PC-3 (cell line): ENCODE measurements at regions of chr1 and their contacts with region 1.

Region 1: DNA sequence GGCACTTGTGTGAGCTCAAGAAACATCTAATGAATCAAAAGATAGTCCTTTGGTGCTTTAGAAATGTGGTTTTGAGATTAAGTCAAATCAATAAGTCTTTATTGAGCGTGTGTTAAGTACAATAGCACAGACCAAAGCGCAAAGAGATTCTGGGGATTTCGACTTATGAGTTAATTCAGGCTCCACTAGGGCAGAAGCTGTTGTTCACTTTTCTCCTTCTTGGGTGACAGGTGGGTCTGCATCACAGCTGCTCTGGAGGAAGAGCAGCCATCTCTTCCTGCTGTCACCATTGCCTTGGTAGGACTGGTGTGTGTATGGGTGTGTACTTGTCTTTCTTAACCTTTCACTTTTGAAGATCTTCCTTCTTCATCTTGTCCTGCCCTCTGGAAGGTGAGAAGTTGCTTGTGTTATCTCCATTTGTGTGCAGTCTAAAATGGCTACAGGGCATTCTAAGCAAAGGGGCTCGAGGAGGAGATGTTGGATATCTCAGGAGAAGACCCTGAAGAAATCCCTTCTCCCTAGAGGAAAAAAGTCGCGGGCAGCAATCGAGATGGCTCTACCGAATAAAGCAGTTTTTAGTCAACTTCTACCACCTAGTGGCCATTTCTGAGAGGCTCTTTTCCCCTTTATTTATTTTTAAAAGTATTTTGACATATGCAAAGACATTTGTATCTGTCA is 22.9 kb upstream of the DISC1 start:
- DNase-seq: peak; percentile 88
- ATAC-seq: peak; percentile 62
- H3K4me3 ChIP-seq: peak overlapping the region; percentile 72
- H3K27ac ChIP-seq: no peak overlapping the region
- H3K4me1 ChIP-seq: peaks cover 24% of the 10 kb centered on the region
- H3K27me3 ChIP-seq: no peaks in the 10 kb centered on the region
- CTCF ChIP-seq: peak; percentile 93

Region 2: GRCh38 chr1:231233735-231234417 is 369.9 kb before region 1 on chr1:
- CTCF ChIA-PET with region 1: no interaction called
- POLR2A ChIA-PET with region 1: interaction called, 17 read pairs
- intact Hi-C with region 1: no loop called
- DNase-seq: no peak
- ATAC-seq: no peak
- H3K4me3 ChIP-seq: no peak overlapping the region
- H3K27ac ChIP-seq: no peak overlapping the region
- H3K4me1 ChIP-seq: no peaks in the 10 kb centered on the region
- H3K27me3 ChIP-seq: no peaks in the 10 kb centered on the region
- CTCF ChIP-seq: no peak

Region 3: GRCh38 chr1:231240883-231241735 is 362.6 kb before region 1 on chr1 and contains the start of gene GNPAT:
- CTCF ChIA-PET with region 1: no interaction called
- POLR2A ChIA-PET with region 1: no interaction called
- intact Hi-C with region 1: loop called (anchors 5 kb)
- DNase-seq: peak; percentile 89
- ATAC-seq: peak; percentile 94
- H3K4me3 ChIP-seq: peak within 1 kb of the TSS; percentile 85
- H3K27ac ChIP-seq: peak within 1 kb of the TSS; percentile 43
- H3K4me1 ChIP-seq: peaks cover 25% of the 10 kb centered on the region
- H3K27me3 ChIP-seq: no peaks in the 10 kb centered on the region
- CTCF ChIP-seq: no peak
- total RNA-seq, gene GNPAT: 40.5 and 45.8 TPM in 2 replicates

Region 4: DNA sequence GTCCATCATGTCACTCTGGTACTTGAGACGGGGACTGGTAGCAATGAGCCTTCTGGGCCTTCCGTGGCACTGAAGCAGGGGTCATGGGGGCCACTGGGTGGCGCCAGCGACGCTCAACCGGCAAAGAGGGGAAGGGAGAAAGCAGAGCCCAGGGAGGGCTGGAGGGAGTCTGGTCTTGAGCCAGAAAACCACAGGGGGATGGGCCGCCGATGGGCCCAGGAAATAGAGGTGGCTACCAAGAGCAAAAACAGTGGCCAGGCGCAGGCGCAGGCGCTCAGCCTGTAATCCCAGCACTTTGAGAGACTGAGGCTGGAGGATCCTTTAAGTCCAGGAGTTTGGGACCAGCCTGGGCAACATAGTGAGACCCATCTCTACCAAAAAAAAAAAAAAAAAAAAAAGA is 287.9 kb before region 1 on chr1:
- CTCF ChIA-PET with region 1: no interaction called
- POLR2A ChIA-PET with region 1: no interaction called
- intact Hi-C with region 1: no loop called
- DNase-seq: peak; percentile 68
- ATAC-seq: peak; percentile 86
- H3K4me3 ChIP-seq: no peak overlapping the region
- H3K27ac ChIP-seq: no peak overlapping the region
- H3K4me1 ChIP-seq: no peaks in the 10 kb centered on the region
- H3K27me3 ChIP-seq: no peaks in the 10 kb centered on the region
- CTCF ChIP-seq: peak; percentile 89

Region 5: DNA sequence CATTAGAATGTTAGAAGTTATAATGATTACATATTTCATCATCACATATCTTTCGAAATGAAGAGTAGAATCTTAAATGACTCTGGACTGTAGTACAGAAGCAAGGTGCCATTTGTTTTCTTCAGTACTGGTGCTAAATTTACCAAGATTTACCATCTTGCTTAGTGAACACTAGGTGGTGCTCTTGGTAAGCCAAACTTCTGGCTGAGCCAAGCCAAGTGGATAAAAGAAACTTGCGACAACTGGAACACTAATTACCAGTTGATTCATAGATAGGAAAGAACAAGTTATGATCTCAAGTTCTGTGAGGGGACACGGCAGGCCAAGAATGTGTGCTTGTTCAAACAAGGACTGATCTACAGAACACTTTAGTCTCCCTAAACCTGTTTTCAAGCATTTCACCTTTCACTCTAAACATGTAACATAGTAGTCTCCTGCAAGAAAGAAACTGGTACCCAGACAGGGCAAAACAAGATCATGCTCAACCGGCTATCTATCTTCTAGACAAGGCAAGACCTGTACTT is 245.8 kb before region 1 on chr1:
- CTCF ChIA-PET with region 1: no interaction called
- POLR2A ChIA-PET with region 1: interaction called, 4 read pairs
- intact Hi-C with region 1: loop called (anchors 1 kb)
- DNase-seq: peak; percentile 79
- ATAC-seq: peak; percentile 91
- H3K4me3 ChIP-seq: no peak overlapping the region
- H3K27ac ChIP-seq: no peak overlapping the region
- H3K4me1 ChIP-seq: no peaks in the 10 kb centered on the region
- H3K27me3 ChIP-seq: no peaks in the 10 kb centered on the region
- CTCF ChIP-seq: peak; percentile 96

Region 6: GRCh38 chr1:231534703-231535159 is 69.0 kb before region 1 on chr1:
- CTCF ChIA-PET with region 1: no interaction called
- POLR2A ChIA-PET with region 1: no interaction called
- intact Hi-C with region 1: loop called (anchors 5 kb)
- DNase-seq: no peak
- ATAC-seq: no peak
- H3K4me3 ChIP-seq: no peak overlapping the region
- H3K27ac ChIP-seq: no peak overlapping the region
- H3K4me1 ChIP-seq: peaks cover 5% of the 10 kb centered on the region
- H3K27me3 ChIP-seq: no peaks in the 10 kb centered on the region
- CTCF ChIP-seq: no peak

Region 7: GRCh38 chr1:231563253-231563652 is 40.5 kb before region 1 on chr1:
- CTCF ChIA-PET with region 1: no interaction called
- POLR2A ChIA-PET with region 1: no interaction called
- intact Hi-C with region 1: no loop called
- DNase-seq: no peak
- ATAC-seq: no peak
- H3K4me3 ChIP-seq: no peak overlapping the region
- H3K27ac ChIP-seq: no peak overlapping the region
- H3K4me1 ChIP-seq: no peaks in the 10 kb centered on the region; the same call in 1 of the 2 replicates
- H3K27me3 ChIP-seq: no peaks in the 10 kb centered on the region
- CTCF ChIP-seq: no peak

Region 8: DNA sequence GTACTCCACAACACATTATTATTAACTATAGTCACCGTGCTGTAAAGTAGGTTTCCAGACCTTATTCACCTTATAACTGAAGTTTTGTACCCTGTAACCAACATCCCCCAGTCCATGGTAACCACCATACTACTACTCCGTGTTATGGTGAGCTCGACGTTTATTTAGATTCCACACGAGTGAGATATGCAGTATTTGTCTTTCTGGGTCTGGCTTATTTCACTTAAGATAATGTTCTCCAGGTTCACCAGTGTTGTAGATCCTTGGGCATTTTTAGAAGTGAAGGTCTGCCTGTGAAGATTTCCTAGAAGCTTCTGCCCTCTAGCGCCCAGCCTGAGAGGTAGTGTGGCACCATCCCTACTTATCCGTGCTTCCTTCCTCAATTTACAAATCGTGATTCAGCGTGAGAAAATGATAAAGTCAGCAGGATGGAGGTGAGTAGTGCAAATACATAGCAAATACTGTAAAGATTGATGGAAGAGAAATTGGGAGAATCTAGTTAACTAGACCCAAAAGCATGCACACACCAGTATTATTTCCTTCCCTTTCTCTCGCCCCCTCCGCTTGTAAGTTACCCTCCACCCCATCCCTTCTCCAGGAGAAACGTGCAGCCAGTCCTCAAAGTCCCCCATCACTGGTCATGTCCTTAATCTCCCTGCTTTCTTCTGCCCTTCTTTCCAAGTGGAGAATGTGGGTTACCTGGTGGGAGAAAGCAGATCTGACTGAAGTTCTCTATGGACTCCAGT is 13.1 kb before region 1 on chr1:
- CTCF ChIA-PET with region 1: interaction called, 8 read pairs
- POLR2A ChIA-PET with region 1: no interaction called
- intact Hi-C with region 1: loop called (anchors 1 kb)
- DNase-seq: peak; percentile 81
- ATAC-seq: peak; percentile 99
- H3K4me3 ChIP-seq: no peak overlapping the region
- H3K27ac ChIP-seq: no peak overlapping the region
- H3K4me1 ChIP-seq: peaks cover 3% of the 10 kb centered on the region; the same call in 1 of the 2 replicates
- H3K27me3 ChIP-seq: no peaks in the 10 kb centered on the region
- CTCF ChIP-seq: peak; percentile 95

Region 9: GRCh38 chr1:232538224-232538942 is 934.6 kb after region 1 on chr1:
- CTCF ChIA-PET with region 1: interaction called, 11 read pairs
- POLR2A ChIA-PET with region 1: no interaction called
- intact Hi-C with region 1: no loop called
- DNase-seq: peak; percentile 91
- ATAC-seq: peak; percentile 83
- H3K4me3 ChIP-seq: peak overlapping the region; percentile 28; the same call in 1 of the 2 replicates
- H3K27ac ChIP-seq: peak overlapping the region; percentile 70
- H3K4me1 ChIP-seq: peaks cover 20% of the 10 kb centered on the region
- H3K27me3 ChIP-seq: no peaks in the 10 kb centered on the region
- CTCF ChIP-seq: no peak